Activated CD8-positive, alpha-beta memory T cell treated with anti-CD3 and anti-CD28 coated beads, Interleukin-2, amount 10 ng/mL, durations not matched to agents 7 days and 5 days (primary cell): ENCODE measurements at regions of chr2 and their contacts with region 1.

Region 1: DNA sequence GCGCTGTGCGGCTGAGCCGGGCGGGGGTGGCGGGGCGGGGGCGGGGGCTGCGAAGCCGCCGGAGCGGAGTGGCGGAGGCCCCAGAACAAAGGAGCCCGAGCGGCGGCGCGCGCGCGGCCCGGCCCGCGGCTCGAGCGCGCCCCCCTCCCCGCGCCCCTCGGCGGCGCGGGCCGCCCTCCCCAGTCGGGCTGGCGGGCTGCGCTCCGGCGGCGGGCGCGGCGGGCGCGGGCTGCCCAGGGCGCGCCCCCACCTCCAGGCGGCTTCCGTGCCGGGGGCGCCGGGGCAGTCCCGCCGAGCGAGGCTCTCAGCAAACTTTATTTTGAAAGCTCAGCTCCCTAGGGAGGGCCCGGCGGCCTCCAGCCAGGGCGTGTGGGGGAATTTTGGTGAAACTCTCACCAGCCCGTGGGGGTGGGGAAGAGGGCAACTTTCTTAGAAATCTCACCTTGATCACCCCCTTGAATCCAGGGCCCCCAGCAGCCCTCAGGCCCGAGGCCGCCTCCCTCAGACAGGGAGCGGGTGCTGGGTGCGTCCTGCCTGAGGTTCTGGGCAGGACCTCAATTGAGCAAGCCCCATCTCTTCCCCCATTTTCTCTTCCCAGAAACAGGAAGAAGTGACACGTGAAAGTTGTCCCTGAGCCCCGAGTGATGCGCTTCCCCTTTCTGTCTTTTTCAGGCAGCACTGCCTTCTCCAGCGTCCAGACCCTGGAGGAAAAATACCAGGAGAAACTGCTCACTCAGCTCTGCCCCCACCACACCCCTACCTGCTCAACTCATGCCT is 786 bp downstream of the TET3 start:
- DNase-seq: peak; percentile 68
- ATAC-seq: peak; percentile 35
- H3K4me3 Mint-ChIP-seq: peak overlapping the region; percentile 74
- H3K27ac Mint-ChIP-seq: peak overlapping the region; percentile 82
- H3K4me1 Mint-ChIP-seq: peaks cover 56% of the 10 kb centered on the region
- H3K27me3 Mint-ChIP-seq: peaks cover 23% of the 10 kb centered on the region

Region 2: DNA sequence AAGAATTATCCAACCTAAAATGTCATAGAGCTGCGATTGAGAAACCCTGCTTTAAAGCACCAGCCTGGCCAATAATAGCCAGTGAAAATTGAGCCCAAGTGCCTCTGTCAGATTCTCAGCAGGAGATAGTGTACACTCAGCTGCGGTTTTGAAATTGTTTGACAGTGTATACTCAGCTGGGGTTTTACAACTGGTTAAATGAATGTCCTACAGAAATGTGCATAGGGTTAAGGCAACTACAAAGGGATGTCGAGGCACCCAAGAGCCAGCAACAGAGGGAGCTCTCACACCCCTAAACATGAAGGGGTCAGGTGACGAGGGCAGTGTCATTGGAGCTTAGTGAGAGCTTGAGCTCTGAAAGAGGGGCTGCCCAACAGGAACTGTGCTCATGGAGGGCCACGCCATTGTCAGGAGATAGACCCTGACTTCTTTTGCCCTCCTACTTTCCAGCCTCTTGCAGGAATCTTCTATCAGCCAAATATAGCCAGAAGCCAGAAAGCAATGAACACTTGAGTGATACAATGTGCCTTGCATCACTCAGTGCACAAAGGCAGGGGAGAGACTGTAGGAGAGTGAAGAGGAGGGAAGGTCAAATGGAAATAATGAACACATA is 77.5 kb before region 1 on chr2:
- CTCF ChIA-PET with region 1: interaction called, 22 read pairs
- DNase-seq: peak; percentile 74
- ATAC-seq: peak; percentile 89
- H3K4me3 Mint-ChIP-seq: no peak overlapping the region
- H3K27ac Mint-ChIP-seq: no peak overlapping the region
- H3K4me1 Mint-ChIP-seq: peaks cover 9% of the 10 kb centered on the region
- H3K27me3 Mint-ChIP-seq: no peaks in the 10 kb centered on the region

Region 3: DNA sequence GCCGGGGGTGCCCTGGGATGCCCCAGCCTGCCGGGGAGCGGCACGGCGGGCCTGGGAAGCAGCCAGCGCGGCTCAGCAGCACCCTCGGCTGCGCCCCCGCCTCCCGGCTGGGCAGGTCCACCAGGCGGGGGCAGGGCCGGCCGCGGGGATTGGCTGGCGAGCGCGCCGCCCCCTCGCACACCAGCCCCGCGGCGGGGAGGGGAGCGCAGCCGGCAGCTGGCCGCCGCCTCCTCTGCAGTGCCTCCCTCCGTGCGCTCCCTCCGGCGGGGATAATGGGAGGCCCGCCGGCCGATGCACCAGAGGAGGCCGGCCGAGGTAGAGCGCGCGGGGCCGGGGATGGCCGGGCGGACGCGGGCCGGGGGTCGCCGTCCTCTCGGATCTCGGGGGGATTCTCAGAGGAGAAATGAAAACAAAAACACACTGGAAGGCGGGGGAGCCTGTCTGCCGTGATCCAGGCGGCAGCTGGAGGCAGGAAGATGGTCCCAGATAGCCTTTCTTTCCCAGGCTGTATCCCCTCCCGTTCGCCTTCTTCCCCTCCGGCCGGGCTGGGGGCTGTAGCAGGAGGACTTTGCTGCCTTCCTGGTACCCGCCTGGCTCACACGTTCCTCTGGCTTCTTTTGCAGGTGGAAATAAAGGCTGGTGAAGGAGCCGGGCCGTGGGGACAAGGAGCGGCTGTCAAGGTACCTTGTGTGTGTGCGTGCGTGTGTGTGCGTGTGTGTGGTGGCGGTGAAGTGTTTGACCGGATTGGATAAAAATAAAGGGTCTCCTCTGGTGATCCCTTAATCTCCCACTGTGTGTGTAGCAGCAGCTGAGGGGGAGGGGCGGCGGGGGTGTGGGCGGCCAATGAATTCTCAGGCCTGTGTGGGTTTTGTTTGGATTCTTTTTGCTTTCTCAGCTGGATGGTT is 17.2 kb after region 1 on chr2:
- CTCF ChIA-PET with region 1: interaction called, 12 read pairs
- DNase-seq: peak; percentile 81
- ATAC-seq: peak; percentile 99
- H3K4me3 Mint-ChIP-seq: peak overlapping the region; percentile 72
- H3K27ac Mint-ChIP-seq: no peak overlapping the region
- H3K4me1 Mint-ChIP-seq: peaks cover 19% of the 10 kb centered on the region
- H3K27me3 Mint-ChIP-seq: peaks cover 4% of the 10 kb centered on the region

Region 4: GRCh38 chr2:74147727-74148456 is 162.4 kb after region 1 on chr2 and contains the start of gene BOLA3:
- CTCF ChIA-PET with region 1: interaction called, 10 read pairs
- DNase-seq: peak; percentile 92
- ATAC-seq: peak; percentile 98
- H3K4me3 Mint-ChIP-seq: no peak within 1 kb of the TSS
- H3K27ac Mint-ChIP-seq: no peak within 1 kb of the TSS
- H3K4me1 Mint-ChIP-seq: peaks cover 4% of the 10 kb centered on the region
- H3K27me3 Mint-ChIP-seq: no peaks in the 10 kb centered on the region
- total RNA-seq, gene BOLA3: 69.5 to 76.1 TPM